H1 (cell line): ENCODE measurements at regions of chr1 and their contacts with region 1.

Region 1: DNA sequence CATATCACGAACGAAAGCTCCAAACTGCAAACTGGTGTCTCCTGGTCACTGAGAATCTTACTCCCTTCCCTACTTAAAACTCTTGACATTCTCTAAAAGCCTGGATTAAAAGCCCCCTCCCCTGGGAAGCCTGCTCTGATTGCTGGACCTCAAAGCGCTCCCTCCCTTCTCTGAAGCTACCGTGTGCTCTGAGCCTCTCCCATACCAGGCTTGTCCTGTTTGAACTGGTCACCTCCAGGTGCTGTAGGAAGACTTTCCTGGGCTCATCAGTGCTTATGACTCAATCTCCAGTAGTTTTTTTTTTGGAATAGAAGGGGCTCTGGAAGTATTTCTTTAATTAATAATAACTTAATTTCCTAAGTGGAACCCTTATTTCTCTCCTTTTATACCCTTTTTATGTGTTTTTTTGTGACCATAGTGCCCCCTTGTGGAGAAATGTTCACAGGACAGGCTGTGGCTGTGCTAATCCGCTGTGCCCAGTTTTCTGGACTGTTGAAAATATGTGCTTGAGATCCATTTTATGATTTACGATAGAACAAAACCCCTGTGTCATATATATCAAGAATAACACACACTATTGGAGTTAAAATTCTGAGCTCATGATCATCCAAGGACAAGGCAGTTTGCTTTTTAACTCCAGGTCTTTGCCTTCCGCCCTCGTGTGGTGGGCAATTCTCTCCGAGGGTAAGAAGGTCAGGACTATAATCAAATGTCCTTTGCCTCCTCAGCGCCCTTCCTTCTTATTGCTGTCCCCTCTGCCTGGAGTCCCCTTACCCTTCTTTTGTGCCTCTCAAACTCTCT is 16.9 kb downstream of the MTARC1 start:
- DNase-seq: no peak
- H3K4me3 ChIP-seq: no peak overlapping the region
- H3K27ac ChIP-seq: no peak overlapping the region
- H3K4me1 ChIP-seq: no peaks in the 10 kb centered on the region; a peak in 1 of 7 replicates
- H3K27me3 ChIP-seq: no peaks in the 10 kb centered on the region
- CTCF ChIP-seq: peak; percentile 42 to 65 (median 58)
- EP300 ChIP-seq: no peak
- POLR2A ChIP-seq: no peak
- RAD21 ChIP-seq: peak; percentile 53 to 61

Region 2: DNA sequence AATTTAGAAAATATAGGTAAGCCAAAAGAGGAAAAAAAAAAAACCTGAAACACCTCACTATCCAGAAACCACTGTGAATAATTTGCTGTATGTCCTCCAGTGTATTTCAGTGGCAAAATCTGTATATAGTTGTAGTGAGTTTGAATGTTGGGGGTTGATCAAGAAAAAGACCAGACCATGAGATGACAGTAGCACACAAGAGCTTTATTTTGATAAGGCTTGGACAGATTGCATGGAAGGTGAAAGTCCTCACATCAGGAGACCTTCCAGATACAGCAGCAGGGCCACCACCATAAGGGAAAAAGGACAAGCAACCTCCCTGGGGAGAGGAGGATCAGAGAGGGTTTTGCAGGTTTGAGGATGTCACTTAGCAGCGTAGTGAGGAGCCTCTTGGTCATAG is 129.7 kb before region 1 on chr1:
- CTCF ChIA-PET with region 1: interaction called, 11 read pairs
- POLR2A ChIA-PET with region 1: no interaction called
- DNase-seq: no peak
- H3K4me3 ChIP-seq: no peak overlapping the region
- H3K27ac ChIP-seq: no peak overlapping the region
- H3K4me1 ChIP-seq: no peaks in the 10 kb centered on the region
- H3K27me3 ChIP-seq: no peaks in the 10 kb centered on the region
- CTCF ChIP-seq: no peak
- EP300 ChIP-seq: no peak
- POLR2A ChIP-seq: no peak
- RAD21 ChIP-seq: no peak

Region 3: GRCh38 chr1:220700556-220701179 is 102.9 kb before region 1 on chr1:
- CTCF ChIA-PET with region 1: interaction called, 10 read pairs
- POLR2A ChIA-PET with region 1: no interaction called
- DNase-seq: no peak
- H3K4me3 ChIP-seq: no peak overlapping the region
- H3K27ac ChIP-seq: no peak overlapping the region
- H3K4me1 ChIP-seq: peaks cover 0 to 8% (median 3%) of the 10 kb centered on the region in 4 experiments; a peak in 4 of 7 replicates
- H3K27me3 ChIP-seq: no peaks in the 10 kb centered on the region
- CTCF ChIP-seq: no peak
- EP300 ChIP-seq: no peak
- POLR2A ChIP-seq: no peak
- RAD21 ChIP-seq: no peak

Region 4: DNA sequence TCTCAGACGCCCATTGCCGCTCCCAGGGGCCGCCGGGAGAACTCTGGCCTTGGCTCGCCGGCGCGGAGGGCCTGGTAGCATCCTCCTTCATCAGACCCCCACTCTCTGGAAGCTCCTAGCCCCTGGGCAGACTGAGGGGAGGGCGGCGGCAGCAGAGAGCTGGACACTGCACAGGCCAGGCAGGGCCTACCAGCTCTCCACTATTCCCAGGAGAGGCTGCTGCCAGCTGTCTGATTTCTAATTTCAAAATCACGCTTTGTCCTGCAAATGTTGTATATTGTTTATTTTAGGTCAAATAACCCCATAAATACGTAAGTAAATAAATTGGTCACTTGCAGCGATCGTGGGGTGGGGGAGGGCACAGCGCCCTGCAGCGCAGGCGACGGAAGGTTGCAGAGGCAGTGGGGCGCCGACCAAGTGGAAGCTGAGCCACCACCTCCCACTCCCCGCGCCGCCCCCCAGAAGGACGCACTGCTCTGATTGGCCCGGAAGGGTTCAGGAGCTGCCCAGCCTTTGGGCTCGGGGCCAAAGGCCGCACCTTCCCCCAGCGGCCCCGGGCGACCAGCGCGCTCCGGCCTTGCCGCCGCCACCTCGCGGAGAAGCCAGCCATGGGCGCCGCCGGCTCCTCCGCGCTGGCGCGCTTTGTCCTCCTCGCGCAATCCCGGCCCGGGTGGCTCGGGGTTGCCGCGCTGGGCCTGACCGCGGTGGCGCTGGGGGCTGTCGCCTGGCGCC is 17.1 kb before region 1 on chr1 and contains the start of gene MTARC1:
- CTCF ChIA-PET with region 1: interaction called, 96 read pairs
- POLR2A ChIA-PET with region 1: interaction called, 11 read pairs
- DNase-seq: peak in 1 of 2 experiments; percentile 81
- H3K4me3 ChIP-seq: peak within 1 kb of the TSS; percentile 59 to 84 (median 69)
- H3K27ac ChIP-seq: peak within 1 kb of the TSS; percentile 63; the same call in 1 of the 2 replicates
- H3K4me1 ChIP-seq: peaks cover 4 to 14% (median 11%) of the 10 kb centered on the region in 4 experiments
- H3K27me3 ChIP-seq: no peaks in the 10 kb centered on the region
- CTCF ChIP-seq: peak in 2 of 3 experiments; percentile 12 to 27; a peak in 2 of 4 replicates
- EP300 ChIP-seq: no peak
- POLR2A ChIP-seq: peak in 1 of 2 experiments; percentile 59; a peak in 2 of 3 replicates
- RAD21 ChIP-seq: peak; percentile 5 to 7; a peak in 1 of 4 replicates
- total RNA-seq, gene MTARC1: 42.4 and 46.2 TPM in 2 replicates